IMR-90 (cell line): ENCODE measurements at regions of chr21 and their contacts with region 1.

Region 1: GRCh38 chr21:42164064-42164789 is 54.7 kb upstream of the ABCG1 start:
- DNase-seq: no peak
- ATAC-seq: no peak; the same call in 1 of the 2 replicates
- H3K4me3 ChIP-seq: no peak overlapping the region
- H3K27ac ChIP-seq: no peak overlapping the region
- H3K4me1 ChIP-seq: no peaks in the 10 kb centered on the region
- H3K27me3 ChIP-seq: peaks cover 5% of the 10 kb centered on the region
- CTCF ChIP-seq: no peak
- POLR2A ChIP-seq: no peak
- RAD21 ChIP-seq: 0 out of 2 replicates have a peak, but pooled peaks have one; percentile 12

Region 2: DNA sequence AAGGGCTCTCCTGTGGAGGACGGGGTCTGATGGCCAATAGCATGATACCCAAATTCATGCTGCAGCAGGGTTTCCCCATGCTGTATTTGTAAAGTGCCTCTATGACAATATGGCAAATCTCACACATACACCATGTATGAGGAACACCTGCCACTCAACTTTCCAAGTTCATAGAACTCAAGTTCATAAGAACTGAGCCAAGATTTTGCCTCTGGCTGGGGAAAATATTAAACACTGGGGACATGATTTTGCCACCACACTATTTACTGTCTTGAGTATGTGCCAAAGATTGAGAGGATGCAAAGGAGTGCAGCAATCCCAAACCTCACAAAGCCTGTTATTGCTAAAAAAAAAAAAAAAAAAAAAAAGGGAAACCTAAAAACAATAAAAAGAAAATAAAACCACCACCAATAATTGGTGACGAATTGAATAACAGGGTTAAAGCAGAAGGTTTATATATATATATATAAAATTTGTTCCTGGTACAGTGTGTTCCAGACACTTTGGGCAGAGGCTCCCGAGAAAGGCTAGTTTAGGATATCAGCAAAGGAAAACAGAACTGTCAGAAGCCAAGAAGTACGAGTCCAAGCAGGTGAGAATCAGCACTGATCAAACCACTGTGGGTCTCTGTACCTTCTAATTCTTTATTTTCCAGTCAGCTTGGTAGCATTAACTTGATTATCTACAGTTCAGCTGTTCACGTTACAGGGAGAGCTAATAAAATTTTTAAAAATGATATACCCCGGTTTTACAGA is 178.4 kb before region 1 on chr21:
- CTCF ChIA-PET with region 1: no interaction called
- POLR2A ChIA-PET with region 1: no interaction called
- dilution Hi-C with region 1: no loop called
- in situ Hi-C with region 1: no loop called
- intact Hi-C with region 1: no loop called
- DNase-seq: no peak
- ATAC-seq: no peak
- H3K4me3 ChIP-seq: no peak overlapping the region
- H3K27ac ChIP-seq: no peak overlapping the region
- H3K4me1 ChIP-seq: no peaks in the 10 kb centered on the region
- H3K27me3 ChIP-seq: no peaks in the 10 kb centered on the region
- CTCF ChIP-seq: no peak
- POLR2A ChIP-seq: no peak
- RAD21 ChIP-seq: no peak

Region 3: GRCh38 chr21:42227909-42228708 is 63.9 kb after region 1 on chr21:
- CTCF ChIA-PET with region 1: no interaction called
- POLR2A ChIA-PET with region 1: no interaction called
- dilution Hi-C with region 1: no loop called
- in situ Hi-C with region 1: no loop called
- intact Hi-C with region 1: loop called (anchors 2 kb)
- DNase-seq: peak; percentile 91
- ATAC-seq: peak; percentile 100
- H3K4me3 ChIP-seq: no peak overlapping the region
- H3K27ac ChIP-seq: peak overlapping the region; percentile 51; the same call in 1 of the 2 replicates
- H3K4me1 ChIP-seq: peaks cover 15% of the 10 kb centered on the region
- H3K27me3 ChIP-seq: no peaks in the 10 kb centered on the region
- CTCF ChIP-seq: no peak
- POLR2A ChIP-seq: no peak
- RAD21 ChIP-seq: no peak

Region 4: DNA sequence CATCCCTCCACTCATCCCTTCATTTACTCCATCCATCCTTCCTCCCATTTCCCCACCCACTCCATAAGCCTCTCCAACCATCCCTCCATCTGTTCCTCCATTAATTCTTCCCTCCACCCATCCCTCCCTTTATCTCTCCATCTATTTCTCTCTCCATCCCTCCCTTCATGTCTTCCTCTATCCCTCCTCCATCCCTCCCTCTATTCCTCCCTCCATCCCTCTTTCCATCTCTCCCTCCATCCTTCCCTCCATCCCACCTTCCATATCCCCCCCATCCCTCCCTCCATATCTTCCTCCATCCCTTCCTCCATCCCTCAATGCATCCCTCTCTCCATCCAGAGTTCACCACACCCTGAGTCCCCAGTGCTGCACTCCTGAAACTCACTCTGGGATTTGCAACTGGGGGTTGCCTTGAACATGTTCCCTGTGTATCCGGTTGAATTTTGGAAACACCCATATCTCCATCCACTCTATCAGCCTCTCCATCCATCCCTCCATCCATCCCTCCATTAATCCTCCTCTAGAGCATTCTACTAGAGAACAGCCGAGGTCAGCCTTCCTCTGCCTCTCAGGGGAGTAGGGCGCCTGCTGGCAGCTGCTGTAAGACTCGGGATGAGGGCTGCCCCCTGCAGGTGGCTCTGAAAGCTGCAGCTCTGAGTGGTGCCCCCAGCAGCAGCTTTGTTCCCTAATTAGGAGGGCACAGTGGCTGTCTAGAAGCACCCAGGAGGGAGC is 94.1 kb after region 1 on chr21:
- CTCF ChIA-PET with region 1: no interaction called
- POLR2A ChIA-PET with region 1: no interaction called
- dilution Hi-C with region 1: no loop called
- in situ Hi-C with region 1: no loop called
- intact Hi-C with region 1: loop called (anchors 5 kb)
- DNase-seq: peak; percentile 32
- ATAC-seq: peak; percentile 66
- H3K4me3 ChIP-seq: no peak overlapping the region
- H3K27ac ChIP-seq: no peak overlapping the region
- H3K4me1 ChIP-seq: peaks cover 21% of the 10 kb centered on the region; the same call in 1 of the 2 replicates
- H3K27me3 ChIP-seq: peaks cover 20% of the 10 kb centered on the region; the same call in 1 of the 2 replicates
- CTCF ChIP-seq: peak; percentile 59
- POLR2A ChIP-seq: no peak
- RAD21 ChIP-seq: peak; percentile 58

Region 5: DNA sequence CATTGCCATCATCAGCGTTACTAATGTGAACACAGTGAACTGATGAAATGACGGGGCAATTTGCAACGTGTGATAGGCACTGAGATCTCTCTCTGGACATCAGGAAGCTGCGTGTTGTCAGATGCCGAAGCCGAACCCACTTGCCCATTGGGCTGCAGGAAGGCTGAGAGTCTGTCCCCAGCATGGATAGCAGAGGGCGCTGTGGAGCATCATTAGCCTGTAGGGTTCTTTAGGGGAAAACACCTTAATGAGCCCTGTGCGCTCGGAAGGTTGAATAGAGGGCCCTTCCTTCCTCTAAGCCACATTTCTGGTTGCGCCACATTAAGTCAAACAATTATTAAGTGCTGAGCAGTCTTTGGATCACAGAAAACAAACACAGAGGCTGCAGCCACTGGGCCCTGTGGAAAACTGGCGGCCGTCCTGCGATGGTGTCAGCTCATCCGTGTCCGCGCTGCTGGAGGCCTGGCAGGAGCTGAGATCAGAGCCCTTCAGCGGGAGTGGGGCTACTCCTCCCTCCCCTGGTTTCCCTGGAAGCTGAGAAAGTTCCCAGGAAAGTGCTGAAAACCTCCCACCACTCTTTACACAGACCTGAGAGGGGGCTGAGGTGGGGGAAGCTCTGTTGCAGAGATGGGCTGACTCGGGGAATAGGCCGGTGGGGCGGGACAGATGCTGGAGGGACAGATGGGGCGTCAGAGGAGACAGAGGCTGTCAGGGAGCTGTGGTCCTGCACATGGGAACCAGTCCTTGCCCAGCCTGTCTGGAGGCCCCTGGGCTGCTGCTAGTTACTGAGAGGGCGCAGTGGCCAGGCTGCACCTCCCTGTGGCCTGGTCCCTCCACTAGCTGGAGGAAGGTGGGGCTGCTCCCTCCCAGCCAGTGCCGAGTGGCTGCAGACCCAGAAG is 173.9 kb after region 1 on chr21:
- CTCF ChIA-PET with region 1: no interaction called
- POLR2A ChIA-PET with region 1: no interaction called
- dilution Hi-C with region 1: no loop called
- in situ Hi-C with region 1: no loop called
- intact Hi-C with region 1: no loop called
- DNase-seq: peak; percentile 35
- ATAC-seq: peak; percentile 84
- H3K4me3 ChIP-seq: no peak overlapping the region
- H3K27ac ChIP-seq: no peak overlapping the region
- H3K4me1 ChIP-seq: no peaks in the 10 kb centered on the region; the same call in 1 of the 2 replicates
- H3K27me3 ChIP-seq: peaks cover 14% of the 10 kb centered on the region
- CTCF ChIP-seq: peak; percentile 41
- POLR2A ChIP-seq: no peak
- RAD21 ChIP-seq: no peak

Region 6: DNA sequence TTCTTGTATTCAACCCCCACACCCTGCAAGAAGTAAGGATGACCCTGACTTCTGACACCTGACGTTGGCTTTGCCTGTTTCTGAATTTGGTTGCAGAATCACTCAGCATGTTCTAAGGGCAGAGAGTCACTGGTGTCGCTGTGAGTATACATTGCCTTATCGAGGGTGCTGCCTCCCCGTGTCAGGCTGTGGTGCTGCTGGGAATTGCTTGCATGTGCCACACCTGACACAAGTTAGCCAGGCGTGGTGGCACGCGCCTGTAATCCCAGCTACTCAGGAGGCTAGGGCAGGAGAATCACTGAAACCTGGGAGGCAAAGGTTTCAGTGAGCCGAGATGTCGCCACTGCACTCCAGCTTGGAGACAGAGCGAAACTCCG is 669.2 kb after region 1 on chr21:
- CTCF ChIA-PET with region 1: no interaction called
- POLR2A ChIA-PET with region 1: no interaction called
- dilution Hi-C with region 1: no loop called
- in situ Hi-C with region 1: loop called (anchors 25 kb)
- intact Hi-C with region 1: no loop called
- DNase-seq: peak; percentile 5
- ATAC-seq: 0 out of 2 replicates have a peak, but pooled peaks have one; percentile 30
- H3K4me3 ChIP-seq: no peak overlapping the region
- H3K27ac ChIP-seq: no peak overlapping the region
- H3K4me1 ChIP-seq: no peaks in the 10 kb centered on the region
- H3K27me3 ChIP-seq: peaks cover 2% of the 10 kb centered on the region; the same call in 1 of the 2 replicates
- CTCF ChIP-seq: 0 out of 2 replicates have a peak, but pooled peaks have one; percentile 12
- POLR2A ChIP-seq: no peak
- RAD21 ChIP-seq: no peak